Adrenal gland (tissue), 19 donors: ENCODE measurements at regions of chr12 and their contacts with region 1.

Region 1: DNA sequence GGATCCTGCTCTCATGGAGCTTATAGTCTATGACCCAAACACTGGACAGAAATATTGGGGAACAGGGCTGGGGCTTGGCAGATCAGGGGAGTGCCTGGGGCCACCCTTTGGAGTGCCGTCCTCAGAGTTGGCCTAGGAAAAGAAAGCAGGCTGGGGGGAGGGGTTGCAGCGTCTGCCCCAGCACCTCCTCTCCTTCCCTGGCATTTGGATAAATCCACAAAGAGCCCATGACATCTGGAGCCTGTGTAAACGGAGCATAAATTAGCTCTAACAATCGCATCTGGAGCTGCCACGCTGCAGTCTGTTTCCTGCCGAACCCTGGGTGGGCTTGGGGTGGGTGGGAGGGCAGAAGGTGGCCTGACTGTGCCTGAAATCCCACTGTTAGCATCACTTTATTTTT is 63.8 kb downstream of the MVK start:
- DNase-seq: no peak
- H3K4me3 ChIP-seq: no peak overlapping the region
- H3K27ac ChIP-seq: no peak overlapping the region
- H3K4me1 ChIP-seq: no peaks in the 10 kb centered on the region
- H3K27me3 ChIP-seq: no peaks in the 10 kb centered on the region
- CTCF ChIP-seq: no peak
- POLR2A ChIP-seq: no peak

Region 2: DNA sequence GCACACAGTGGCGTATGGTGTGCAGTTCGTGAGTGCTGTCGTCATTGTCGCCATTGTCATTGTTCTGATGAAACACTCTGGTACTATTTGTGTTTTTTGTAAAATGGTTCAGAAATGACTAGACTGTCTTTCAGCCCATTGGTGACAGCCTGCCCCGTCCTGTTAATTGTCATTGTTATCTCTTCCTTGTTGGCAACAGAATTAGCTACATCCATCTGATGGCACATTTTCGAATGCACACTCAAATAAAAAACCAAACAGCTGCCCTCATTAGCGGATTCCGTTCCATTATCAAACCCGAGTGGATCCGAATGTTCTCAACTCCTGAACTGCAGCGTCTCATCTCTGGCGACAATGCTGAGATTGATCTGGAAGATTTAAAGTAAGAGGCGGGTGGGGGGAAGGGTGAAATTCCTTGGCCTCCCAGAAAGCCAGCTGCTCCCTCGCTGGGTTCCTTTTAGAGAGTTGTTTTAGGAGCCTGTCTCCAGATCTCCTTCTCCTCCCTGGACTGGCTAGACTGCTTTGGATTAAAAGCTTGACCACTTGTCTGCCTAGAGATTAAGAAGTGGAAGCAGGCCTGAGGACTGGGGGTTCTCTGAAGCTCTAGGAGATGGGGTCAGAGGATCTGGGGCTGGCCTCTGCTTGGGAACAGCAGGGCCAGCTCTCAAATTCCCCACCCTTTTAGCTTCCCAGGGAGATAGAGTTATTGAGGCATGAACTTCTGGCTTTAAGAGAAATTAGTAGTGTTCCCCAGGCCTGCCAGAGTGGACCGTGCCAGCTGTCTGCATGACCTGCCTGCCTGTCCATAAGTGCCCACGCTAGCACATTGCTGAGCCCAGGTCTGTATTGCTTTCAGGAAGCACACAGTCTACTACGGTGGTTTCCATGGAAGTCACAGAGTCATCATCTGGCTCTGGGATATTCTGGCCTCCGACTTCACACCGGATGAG is 107.4 kb before region 1 on chr12:
- intact Hi-C with region 1: no loop called
- DNase-seq: peak in 1 of 7 donors; percentile 63
- H3K4me3 ChIP-seq: no peak overlapping the region
- H3K27ac ChIP-seq: peak overlapping the region in 1 of 5 donors; percentile 20
- H3K4me1 ChIP-seq: no peaks in the 10 kb centered on the region
- H3K27me3 ChIP-seq: no peaks in the 10 kb centered on the region
- CTCF ChIP-seq: no peak
- POLR2A ChIP-seq: no peak

Region 3: GRCh38 chr12:109597795-109598427 is 39.4 kb before region 1 on chr12:
- intact Hi-C with region 1: no loop called
- DNase-seq: peak; percentile 89 to 95 (median 93)
- H3K4me3 ChIP-seq: no peak overlapping the region
- H3K27ac ChIP-seq: peak overlapping the region in 1 of 5 donors; percentile 12
- H3K4me1 ChIP-seq: peaks cover 0 to 5% of the 10 kb centered on the region in 2 donors
- H3K27me3 ChIP-seq: no peaks in the 10 kb centered on the region
- CTCF ChIP-seq: peak; percentile 96 to 98 (median 96)
- POLR2A ChIP-seq: no peak

Region 4: GRCh38 chr12:109673884-109674283 is 36.5 kb after region 1 on chr12:
- intact Hi-C with region 1: no loop called
- DNase-seq: no peak
- H3K4me3 ChIP-seq: no peak overlapping the region
- H3K27ac ChIP-seq: no peak overlapping the region
- H3K4me1 ChIP-seq: no peaks in the 10 kb centered on the region
- H3K27me3 ChIP-seq: no peaks in the 10 kb centered on the region
- CTCF ChIP-seq: no peak
- POLR2A ChIP-seq: no peak

Region 5: GRCh38 chr12:109685574-109686447 is 48.5 kb after region 1 on chr12:
- intact Hi-C with region 1: loop called in 1 of 2 experiments (anchors 2 kb)
- DNase-seq: peak in 1 of 7 donors; percentile 39
- H3K4me3 ChIP-seq: no peak overlapping the region
- H3K27ac ChIP-seq: no peak overlapping the region
- H3K4me1 ChIP-seq: peaks cover 0 to under 1% of the 10 kb centered on the region in 2 donors
- H3K27me3 ChIP-seq: no peaks in the 10 kb centered on the region
- CTCF ChIP-seq: no peak
- POLR2A ChIP-seq: no peak